Prostate gland (tissue), 2 donors: ENCODE measurements at regions of chr9 and their contacts with region 1.

Region 1: DNA sequence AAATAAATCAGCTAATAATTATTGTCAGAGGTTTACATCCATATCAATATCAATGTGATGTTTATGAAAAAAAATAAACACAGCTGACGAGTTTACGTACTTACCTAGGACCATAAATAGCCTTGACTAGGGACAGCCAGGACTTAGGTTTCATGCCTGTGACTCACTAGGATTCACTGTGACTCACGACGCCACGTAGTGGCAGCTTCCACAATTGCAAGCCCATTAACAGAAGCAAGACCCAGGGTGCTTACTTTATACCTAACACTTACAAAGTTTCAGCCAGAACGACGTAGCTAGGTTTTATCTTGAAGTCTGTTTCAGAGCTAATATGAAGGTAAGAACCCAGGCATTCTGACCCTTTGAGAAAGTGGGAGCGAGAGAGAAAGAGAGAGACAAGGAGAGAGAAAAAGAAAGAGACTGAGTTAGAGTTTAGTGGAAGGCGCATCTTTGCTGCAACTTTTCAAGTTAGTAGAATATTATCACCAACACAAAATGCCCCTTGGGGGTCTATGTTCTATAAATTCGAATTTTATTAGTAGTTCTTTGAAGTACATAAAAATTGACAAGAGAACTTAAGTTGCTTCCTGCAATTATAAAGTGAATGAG is 191.2 kb downstream of the GNA14 start:
- DNase-seq: peak; percentile 77
- H3K4me3 ChIP-seq: no peak overlapping the region
- H3K27ac ChIP-seq: no peak overlapping the region
- H3K4me1 ChIP-seq: no peaks in the 10 kb centered on the region
- H3K27me3 ChIP-seq: no peaks in the 10 kb centered on the region
- CTCF ChIP-seq: peak; percentile 70 to 82 (median 76)
- POLR2A ChIP-seq: no peak

Region 2: DNA sequence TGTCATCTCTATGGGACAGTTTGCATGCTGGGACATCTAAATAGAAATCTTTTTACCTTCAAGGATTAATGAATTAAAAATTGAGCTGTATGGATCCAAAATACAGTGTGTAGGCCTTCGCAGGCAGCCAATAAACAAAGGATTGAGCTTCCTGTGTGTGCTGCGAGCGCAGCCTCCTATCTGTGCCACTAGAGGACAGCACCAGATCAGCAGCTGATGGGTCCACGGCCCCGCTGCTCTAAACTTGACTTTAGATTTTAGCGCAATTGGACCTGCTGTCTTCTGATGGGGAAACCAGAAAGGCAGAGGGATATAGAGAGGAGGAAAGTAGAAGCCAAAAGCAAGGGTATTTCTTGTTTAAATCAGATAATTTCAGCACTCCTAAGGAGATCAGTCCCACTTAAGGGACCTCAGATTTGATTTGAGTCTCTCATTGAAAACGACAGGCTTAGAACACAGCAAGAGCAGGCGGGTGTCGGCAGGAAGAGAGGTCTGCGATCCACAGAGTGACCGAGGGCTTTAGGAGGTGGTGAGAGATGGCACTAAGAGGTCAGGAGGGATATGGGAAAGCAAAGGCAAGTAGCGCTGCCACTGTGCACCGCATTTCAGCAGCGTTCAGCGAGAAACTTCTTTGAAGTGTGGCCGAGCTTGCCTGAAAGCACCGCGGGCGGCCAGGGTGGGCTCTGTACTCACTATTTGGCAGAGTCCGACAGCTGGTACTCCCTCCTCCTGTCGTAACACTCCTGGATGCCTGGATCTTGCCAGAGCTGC is 23.1 kb before region 1 on chr9:
- intact Hi-C with region 1: no loop called
- DNase-seq: peak; percentile 58
- H3K4me3 ChIP-seq: no peak overlapping the region
- H3K27ac ChIP-seq: no peak overlapping the region
- H3K4me1 ChIP-seq: no peaks in the 10 kb centered on the region
- H3K27me3 ChIP-seq: no peaks in the 10 kb centered on the region
- CTCF ChIP-seq: peak; percentile 68 to 93 (median 80)
- POLR2A ChIP-seq: no peak

Region 3: GRCh38 chr9:77514886-77515711 is 58.2 kb after region 1 on chr9:
- intact Hi-C with region 1: no loop called
- DNase-seq: no peak
- H3K4me3 ChIP-seq: no peak overlapping the region
- H3K27ac ChIP-seq: no peak overlapping the region
- H3K4me1 ChIP-seq: no peaks in the 10 kb centered on the region
- H3K27me3 ChIP-seq: no peaks in the 10 kb centered on the region
- CTCF ChIP-seq: no peak
- POLR2A ChIP-seq: no peak

Region 4: DNA sequence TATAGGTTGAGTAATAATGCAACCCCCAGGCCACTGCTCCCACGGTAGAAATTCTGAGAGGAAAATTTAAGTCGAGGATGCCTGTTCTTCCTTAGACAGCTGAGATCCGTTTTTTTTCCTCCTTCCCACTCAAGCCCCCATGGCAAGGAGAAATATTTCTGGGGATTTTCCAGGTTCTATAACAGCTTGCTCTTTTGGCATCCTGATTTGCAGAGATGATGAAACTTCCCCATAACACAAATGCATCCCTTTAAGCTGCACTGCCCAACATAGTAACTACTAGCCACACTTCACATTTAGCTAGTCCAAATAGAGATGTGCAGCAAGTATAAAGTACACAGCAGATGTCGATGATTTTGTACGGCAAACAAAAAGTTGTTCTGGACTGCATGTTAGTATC is 223.6 kb after region 1 on chr9:
- intact Hi-C with region 1: no loop called
- DNase-seq: no peak
- H3K4me3 ChIP-seq: no peak overlapping the region
- H3K27ac ChIP-seq: no peak overlapping the region
- H3K4me1 ChIP-seq: no peaks in the 10 kb centered on the region
- H3K27me3 ChIP-seq: no peaks in the 10 kb centered on the region
- CTCF ChIP-seq: no peak
- POLR2A ChIP-seq: no peak

Region 5: GRCh38 chr9:77751341-77752091 is 294.6 kb after region 1 on chr9:
- intact Hi-C with region 1: loop called (anchors 5 kb)
- DNase-seq: peak; percentile 64
- H3K4me3 ChIP-seq: no peak overlapping the region
- H3K27ac ChIP-seq: peak overlapping the region; percentile 6 to 14
- H3K4me1 ChIP-seq: no peaks in the 10 kb centered on the region
- H3K27me3 ChIP-seq: no peaks in the 10 kb centered on the region
- CTCF ChIP-seq: peak in 3 of 4 experiments; percentile 40 to 68 (median 59)
- POLR2A ChIP-seq: no peak